Activated CD4-positive, alpha-beta T cell treated with anti-CD3 and anti-CD28 coated beads, Interleukin-2, amount 10 ng/mL, durations not matched to agents 24 days and 14 days (primary cell): ENCODE measurements at regions of chr15 and their contacts with region 1.

Region 1: DNA sequence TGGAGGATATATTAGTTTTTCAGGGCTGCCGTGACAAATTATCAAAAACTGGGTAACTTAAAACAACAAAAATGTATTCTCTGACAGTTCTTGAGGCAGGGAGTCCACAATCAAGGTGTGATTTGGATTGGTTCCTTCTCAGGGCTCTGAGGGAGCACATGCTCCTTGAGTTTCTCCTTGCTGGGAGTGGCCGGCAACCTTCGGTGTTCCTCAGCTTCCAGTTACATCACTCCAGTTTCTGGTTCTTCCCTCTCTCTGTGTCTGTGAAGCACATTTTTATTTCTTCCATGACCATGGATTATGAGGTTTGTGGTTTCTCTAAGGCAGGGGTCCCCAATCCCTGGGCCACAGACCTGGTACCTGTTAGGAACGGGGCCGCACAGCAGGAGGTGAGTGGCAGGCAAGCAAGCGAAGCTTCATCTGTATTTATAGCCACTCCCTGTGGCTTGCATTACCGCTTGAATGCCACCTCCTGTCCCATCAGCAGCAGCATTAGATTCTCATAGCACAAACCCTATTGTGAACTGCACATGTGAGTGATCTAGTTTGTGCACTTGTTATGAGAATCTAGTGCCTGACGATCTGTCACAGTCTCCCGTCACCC is 24.3 kb downstream of the LRRC28 start:
- DNase-seq: peak; percentile 51
- H3K4me3 Mint-ChIP-seq: no peak overlapping the region
- H3K27ac Mint-ChIP-seq: no peak overlapping the region
- H3K4me1 Mint-ChIP-seq: peaks cover 25% of the 10 kb centered on the region
- H3K27me3 Mint-ChIP-seq: no peaks in the 10 kb centered on the region

Region 2: DNA sequence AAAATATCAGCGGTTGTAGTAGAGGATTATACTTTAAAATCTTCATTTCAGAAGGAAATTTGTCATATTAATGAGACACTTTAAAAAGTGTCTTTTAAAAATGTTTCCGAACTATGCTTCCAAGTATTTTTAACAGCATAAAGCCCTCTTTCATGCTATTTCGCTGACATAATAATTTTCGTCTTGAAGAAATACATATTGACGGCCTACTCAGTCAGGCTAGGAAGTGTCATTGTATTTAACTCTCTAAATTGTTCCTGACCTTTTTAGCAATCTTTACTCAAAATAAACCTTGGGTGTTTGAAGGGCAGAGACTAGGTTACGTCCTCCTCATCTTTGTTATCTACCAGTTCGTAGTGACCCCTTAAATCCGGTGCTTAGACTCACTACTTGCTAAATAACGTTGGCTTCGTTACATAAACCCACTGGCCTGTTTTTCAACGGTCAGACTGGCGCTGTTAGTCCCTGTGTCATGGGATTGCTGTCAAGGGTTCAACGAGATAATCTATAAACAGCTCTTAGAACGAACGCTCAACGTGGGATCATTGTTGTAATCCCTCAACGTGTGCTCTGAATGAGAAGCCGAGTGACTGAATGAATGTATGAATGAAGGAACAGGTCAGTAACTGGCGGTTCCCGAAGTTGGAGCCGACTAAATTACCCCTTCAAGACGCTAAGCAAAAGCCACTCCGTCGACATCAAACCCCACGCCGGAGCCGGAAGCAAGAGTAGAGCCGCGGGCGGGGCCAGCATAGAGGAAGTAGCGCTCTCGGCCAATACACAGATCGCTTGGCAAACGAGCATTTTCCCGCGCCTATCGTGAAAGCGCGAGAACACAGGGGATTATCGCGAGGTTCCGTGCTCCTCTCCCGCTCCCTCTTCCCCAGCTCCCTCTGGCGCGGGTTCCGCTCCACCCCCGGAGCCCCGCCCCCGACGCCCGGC is 24.9 kb before region 1 on chr15:
- intact Hi-C with region 1: loop called (anchors 2 kb)
- DNase-seq: peak; percentile 99
- H3K4me3 Mint-ChIP-seq: peak overlapping the region; percentile 94
- H3K27ac Mint-ChIP-seq: peak overlapping the region; percentile 94
- H3K4me1 Mint-ChIP-seq: peaks cover 26% of the 10 kb centered on the region
- H3K27me3 Mint-ChIP-seq: no peaks in the 10 kb centered on the region

Region 3: GRCh38 chr15:99264125-99264524 is 11.5 kb before region 1 on chr15:
- intact Hi-C with region 1: no loop called
- DNase-seq: no peak
- H3K4me3 Mint-ChIP-seq: no peak overlapping the region
- H3K27ac Mint-ChIP-seq: no peak overlapping the region
- H3K4me1 Mint-ChIP-seq: peaks cover 10% of the 10 kb centered on the region
- H3K27me3 Mint-ChIP-seq: no peaks in the 10 kb centered on the region

Region 4: GRCh38 chr15:99755692-99756409 is 480.2 kb after region 1 on chr15:
- intact Hi-C with region 1: loop called (anchors 1 kb)
- DNase-seq: peak; percentile 83
- H3K4me3 Mint-ChIP-seq: no peak overlapping the region
- H3K27ac Mint-ChIP-seq: no peak overlapping the region
- H3K4me1 Mint-ChIP-seq: peaks cover 5% of the 10 kb centered on the region
- H3K27me3 Mint-ChIP-seq: peaks cover 4% of the 10 kb centered on the region

Region 5: GRCh38 chr15:100349696-100350433 is 1074.2 kb after region 1 on chr15:
- intact Hi-C with region 1: loop called (anchors 10 kb)
- DNase-seq: peak; percentile 97
- H3K4me3 Mint-ChIP-seq: peak overlapping the region; percentile 93
- H3K27ac Mint-ChIP-seq: peak overlapping the region; percentile 84
- H3K4me1 Mint-ChIP-seq: peaks cover 9% of the 10 kb centered on the region
- H3K27me3 Mint-ChIP-seq: peaks cover 20% of the 10 kb centered on the region